BJ (cell line): ENCODE measurements at regions of chr1 and their contacts with region 1.

Region 1: GRCh38 chr1:219812491-219813203 is 115.7 kb downstream of the SLC30A10 start:
- DNase-seq: no peak
- H3K4me3 ChIP-seq: no peak overlapping the region
- H3K27me3 ChIP-seq: peaks cover 10% of the 10 kb centered on the region
- CTCF ChIP-seq: peak; percentile 77

Region 2: GRCh38 chr1:219801156-219801820 is 11.4 kb before region 1 on chr1:
- CTCF ChIA-PET with region 1: interaction called, 11 read pairs
- POLR2A ChIA-PET with region 1: no interaction called
- DNase-seq: no peak
- H3K4me3 ChIP-seq: no peak overlapping the region
- H3K27me3 ChIP-seq: no peaks in the 10 kb centered on the region
- CTCF ChIP-seq: no peak

Region 3: GRCh38 chr1:219824338-219824737 is 11.7 kb after region 1 on chr1:
- CTCF ChIA-PET with region 1: no interaction called
- POLR2A ChIA-PET with region 1: no interaction called
- DNase-seq: no peak
- H3K4me3 ChIP-seq: no peak overlapping the region
- H3K27me3 ChIP-seq: no peaks in the 10 kb centered on the region
- CTCF ChIP-seq: no peak